ENCODE measurements at regions of chr2 and their contacts with region 1.

Region 1: DNA sequence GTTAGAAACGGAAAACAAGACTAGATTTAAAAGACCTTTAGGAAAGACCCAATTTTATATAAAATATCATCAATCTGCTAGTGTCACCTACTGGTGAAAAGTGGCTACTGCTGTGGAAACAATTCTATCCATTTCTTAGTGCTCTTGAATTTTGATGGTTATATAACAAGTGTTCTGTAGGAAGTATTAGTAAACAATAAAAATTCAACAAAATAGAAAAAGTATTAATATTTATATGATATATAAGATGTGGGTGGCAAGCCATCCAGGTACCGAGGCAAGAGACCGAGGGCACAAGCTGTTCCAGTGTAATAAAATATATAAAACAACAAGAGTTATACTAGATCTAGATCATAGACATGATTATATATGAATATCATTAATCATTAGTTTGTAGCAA is 6.2 kb upstream of the TMEM87B start:
- DNase-seq: peak in 1 of 4 donors; percentile 70
- ATAC-seq: peak; percentile 92
- H3K4me3 ChIP-seq: no peak overlapping the region
- H3K27ac ChIP-seq: no peak overlapping the region
- H3K4me1 ChIP-seq: peaks cover 6 to 39% of the 10 kb centered on the region in 2 donors
- H3K27me3 ChIP-seq: no peaks in the 10 kb centered on the region
- CTCF ChIP-seq: peak; percentile 75 to 89

Region 2: DNA sequence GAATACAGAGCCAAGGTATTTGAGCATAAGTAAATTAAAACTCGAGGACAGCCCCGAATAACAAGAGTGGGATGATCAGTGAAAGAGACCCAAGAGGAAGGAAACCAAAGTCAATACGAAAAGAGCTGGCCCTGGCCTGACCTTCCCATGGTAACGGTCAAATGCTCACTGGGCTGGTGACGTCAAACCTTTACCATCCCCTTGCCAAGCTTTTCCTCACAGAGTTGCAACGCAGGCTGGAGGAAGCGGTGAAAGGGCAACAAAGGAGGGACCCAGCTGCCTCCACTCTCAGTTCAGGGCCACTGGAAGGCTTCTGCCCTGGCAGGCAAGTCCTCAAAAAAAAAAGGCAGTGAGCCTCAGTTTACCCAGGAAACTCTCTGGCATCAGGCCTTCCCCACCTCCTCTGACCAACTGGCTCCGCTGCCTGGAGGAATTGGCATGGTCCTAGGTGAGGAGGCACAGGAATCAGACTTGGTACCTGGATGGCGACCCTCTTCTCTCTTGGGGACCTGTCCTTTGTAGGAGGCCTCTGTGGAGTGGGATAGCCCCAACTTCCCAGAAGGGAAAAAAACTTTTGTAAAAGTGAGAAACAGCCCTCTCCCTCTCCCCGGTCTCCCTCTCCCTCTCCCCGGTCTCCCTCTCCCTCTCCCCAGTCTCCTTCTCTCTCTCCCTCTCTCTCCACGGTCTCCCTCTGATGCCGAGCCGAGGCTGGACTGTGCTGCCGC is 377.3 kb before region 1 on chr2:
- intact Hi-C with region 1: no loop called
- DNase-seq: peak in 1 of 4 donors; percentile 82
- ATAC-seq: peak; percentile 71
- H3K4me3 ChIP-seq: no peak overlapping the region
- H3K27ac ChIP-seq: no peak overlapping the region
- H3K4me1 ChIP-seq: peaks cover 0 to 34% of the 10 kb centered on the region in 2 donors
- H3K27me3 ChIP-seq: no peaks in the 10 kb centered on the region
- CTCF ChIP-seq: no peak

Region 3: DNA sequence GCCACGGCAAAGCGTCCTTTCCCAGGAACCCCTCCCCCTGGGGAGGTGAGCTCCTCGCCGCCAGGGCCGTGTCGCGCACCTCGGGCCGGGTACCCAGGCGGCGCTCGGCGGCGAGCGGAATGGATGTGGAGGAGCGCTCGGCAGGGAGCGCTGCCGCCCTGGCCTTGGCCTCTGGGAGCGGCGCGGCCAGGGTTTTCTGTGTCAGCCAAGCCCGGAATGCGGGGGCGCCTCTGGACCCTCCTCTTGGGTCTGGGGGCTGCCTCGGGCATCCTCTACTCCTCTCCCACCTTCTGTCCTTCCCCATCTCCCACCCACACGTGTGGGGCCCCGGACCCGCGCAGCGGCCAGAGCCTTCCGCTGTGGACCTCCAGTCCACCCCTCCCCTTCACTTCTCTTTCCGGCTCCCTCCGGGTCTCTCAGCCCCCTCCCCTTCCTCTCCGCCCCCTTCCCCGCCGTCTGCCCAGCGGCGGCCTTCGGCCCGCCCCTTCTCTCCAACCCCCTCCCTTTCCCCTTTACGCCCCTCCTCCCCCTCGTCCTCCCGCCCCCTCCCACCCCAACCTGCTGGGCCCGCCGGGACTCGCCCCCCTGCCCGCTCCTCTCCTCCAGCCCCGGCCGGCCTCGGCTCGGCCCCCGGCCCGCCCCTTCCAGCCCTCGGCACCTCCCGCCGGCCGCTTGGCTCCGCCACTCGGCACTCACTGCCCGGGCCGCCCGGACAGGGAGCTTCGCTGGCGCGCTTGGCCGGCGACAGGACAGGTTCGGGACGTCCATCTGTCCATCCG is 150.8 kb before region 1 on chr2 and contains the start of gene MERTK:
- intact Hi-C with region 1: loop called in 1 of 2 experiments (anchors 5 kb)
- DNase-seq: peak; percentile 92 to 97 (median 94)
- ATAC-seq: peak; percentile 92
- H3K4me3 ChIP-seq: peak within 1 kb of the TSS; percentile 70 to 90
- H3K27ac ChIP-seq: peak within 1 kb of the TSS; percentile 86 to 88
- H3K4me1 ChIP-seq: peaks cover 8 to 55% of the 10 kb centered on the region in 2 donors
- H3K27me3 ChIP-seq: peaks cover 0 to 12% of the 10 kb centered on the region in 2 donors
- CTCF ChIP-seq: peak; percentile 41 to 52
- polyA plus RNA-seq, gene MERTK: 15.3 to 21.8 (median 18.4) TPM

Measured in left lung (tissue), 14 donors.